ENCODE measurements at regions of chr1 and their contacts with region 1.

Region 1: DNA sequence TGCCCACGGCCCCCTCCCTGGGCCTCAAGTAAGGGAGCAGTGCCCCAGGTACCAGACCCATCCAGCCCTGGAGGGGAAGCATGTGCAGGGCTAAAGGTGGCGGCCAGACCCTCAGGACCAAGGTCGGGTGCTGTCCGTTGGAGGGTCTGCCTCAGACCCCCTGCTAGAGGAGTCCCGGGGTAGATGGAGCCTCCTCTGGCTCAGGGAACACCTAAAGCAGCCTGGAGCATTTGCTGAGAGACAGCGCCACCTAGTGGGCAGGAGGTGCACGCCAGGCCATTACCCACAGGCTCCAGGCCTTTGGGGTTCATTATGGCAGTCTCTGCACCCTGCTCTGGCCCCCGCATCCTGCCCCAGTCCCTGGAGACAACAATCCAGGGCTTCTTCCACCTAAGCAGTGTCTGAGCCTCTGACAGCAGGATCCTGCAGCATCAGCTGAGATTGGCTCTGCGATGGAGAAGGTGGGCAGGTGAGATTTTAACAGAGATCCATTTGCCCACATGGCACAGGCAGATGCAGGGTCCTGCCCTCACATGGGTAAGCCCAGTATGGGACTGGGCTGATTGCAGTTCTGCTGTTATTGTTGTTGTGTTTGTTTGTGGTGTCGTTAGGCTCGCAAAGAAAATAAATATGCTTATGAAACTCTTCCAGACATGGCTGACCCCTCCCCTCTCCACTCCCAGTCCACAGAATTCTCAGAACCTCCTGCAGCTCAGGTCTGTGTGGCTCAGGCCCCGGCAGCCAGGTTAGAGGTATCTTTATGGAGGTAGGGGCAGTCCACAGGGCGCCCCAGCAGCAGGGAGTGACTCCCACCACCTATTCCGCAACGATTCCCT is 42.4 kb downstream of the CTNNBIP1 start:
- DNase-seq: peak; percentile 87
- ATAC-seq: peak; percentile 86 to 90
- H3K4me3 ChIP-seq: no peak overlapping the region
- H3K27ac ChIP-seq: no peak overlapping the region
- H3K4me1 ChIP-seq: no peaks in the 10 kb centered on the region
- H3K27me3 ChIP-seq: no peaks in the 10 kb centered on the region
- CTCF ChIP-seq: peak; percentile 98

Region 2: DNA sequence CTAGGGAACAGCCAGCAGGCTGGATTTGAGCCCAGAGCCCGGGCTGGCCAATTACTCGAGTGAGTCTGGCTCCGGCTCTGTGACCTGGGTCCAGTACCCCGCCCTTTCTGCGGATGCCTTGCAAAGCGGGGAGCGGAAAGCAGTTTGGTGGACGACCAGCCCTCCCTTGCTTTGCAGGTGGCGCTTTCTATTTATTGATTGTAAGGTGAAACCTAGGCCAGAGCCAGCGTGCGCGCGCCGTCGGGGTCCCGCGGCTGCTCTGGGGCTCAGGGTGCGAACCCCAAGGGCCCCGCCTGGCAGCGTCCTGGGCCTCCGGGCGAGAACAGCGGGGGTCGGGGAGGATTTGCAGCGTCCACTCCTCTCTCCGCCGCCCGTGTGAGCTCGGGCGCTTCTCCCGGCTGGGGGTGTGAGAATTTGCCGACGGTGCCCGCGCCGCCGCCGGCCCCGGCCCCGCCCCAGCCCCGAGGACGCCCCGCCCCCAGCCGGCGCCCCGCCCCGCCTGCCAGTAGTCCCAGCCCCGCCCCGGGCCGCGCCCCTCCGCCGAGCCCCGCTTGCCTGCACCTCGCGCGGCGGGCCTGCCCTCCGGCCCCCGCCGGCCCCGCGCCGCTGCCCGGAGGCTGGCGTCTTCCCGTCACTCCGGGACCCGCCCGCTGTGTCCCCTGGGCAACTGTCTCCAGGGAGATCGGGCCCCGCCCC is 178.5 kb before region 1 on chr1:
- intact Hi-C with region 1: no loop called
- DNase-seq: peak; percentile 91
- ATAC-seq: peak; percentile 93 to 95
- H3K4me3 ChIP-seq: peak overlapping the region; percentile 66
- H3K27ac ChIP-seq: peak overlapping the region; percentile 69
- H3K4me1 ChIP-seq: peaks cover 39% of the 10 kb centered on the region
- H3K27me3 ChIP-seq: no peaks in the 10 kb centered on the region
- CTCF ChIP-seq: no peak

Region 3: DNA sequence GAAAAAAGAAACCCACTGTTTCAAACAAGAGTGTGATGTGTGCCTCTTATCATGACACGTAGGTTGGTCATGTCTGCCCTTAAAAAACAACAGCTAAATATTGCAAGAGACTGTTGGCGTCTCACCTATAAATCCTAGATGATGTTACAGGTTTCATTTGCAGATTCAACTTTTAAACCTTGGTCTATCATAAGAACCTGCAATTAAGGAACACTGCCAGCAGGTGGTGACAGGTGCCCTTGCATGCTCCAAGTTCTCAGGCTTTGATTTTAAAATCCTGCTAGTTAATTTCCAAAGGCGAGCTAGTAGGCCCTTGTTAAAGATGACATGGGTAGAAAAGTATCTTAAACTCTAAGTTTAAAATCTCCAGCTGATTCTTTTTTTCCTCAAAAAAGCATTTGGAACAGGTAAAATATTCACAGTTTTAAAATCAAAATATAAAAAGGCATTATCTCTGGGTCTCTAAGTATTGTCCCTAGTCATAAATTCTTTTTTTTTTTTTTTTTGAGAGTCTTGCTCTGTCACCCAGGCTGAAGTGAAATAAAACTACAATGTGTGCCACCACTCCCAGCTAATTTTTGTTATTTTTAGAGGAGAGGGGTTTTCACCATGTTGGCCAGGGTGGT is 83.0 kb before region 1 on chr1:
- intact Hi-C with region 1: loop called (anchors 5 kb)
- DNase-seq: no peak
- ATAC-seq: peak; percentile 56 to 68
- H3K4me3 ChIP-seq: no peak overlapping the region
- H3K27ac ChIP-seq: no peak overlapping the region
- H3K4me1 ChIP-seq: no peaks in the 10 kb centered on the region
- H3K27me3 ChIP-seq: no peaks in the 10 kb centered on the region
- CTCF ChIP-seq: peak; percentile 69